Ovary (tissue), 10 donors: ENCODE measurements at regions of chr1 and their contacts with region 1.

Region 1: DNA sequence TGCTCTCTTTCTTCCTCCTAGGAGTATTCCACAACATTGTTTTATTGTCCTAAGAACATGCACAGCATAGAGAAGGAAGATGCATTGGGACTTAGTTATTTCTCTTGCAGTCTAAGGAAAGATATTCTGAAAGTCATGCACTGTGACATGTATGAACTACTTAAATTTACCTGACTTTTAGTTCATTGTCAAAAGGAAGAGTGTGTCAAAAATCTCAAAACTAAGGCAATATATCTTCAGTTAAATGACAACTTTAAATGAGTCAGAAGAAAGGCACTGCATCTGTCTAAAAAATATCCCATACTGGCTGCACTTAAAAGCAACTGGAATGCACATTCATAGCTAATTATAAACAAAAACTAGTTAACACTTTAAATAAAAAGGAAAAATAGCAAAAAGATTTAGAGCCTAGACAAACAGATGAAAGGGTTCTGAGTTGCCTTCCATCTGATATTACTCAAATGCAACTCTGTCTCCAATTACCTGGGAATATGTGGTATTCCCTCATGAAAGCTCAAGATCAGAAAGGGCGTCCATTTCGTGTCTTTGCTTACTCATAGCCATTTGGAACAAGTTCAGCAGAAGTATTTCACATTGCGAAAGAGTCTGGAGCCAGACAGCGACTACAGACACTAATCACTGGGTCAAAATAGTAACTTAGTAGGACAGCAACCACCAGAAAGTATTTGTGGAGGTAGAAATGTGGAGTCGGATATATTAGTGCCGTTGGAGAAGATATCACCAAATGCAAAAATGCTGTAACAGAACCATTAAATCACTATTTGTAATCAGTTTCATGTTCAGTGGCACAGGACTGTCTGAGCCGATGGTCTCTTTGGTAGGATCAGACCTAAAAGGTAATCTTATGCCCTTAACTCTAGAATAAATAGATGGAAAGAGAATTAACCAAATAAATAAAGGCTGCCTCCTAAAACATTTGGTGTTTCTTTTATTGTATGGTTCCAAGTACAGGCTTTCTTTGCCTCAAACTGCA is 225.7 kb downstream of the GREM2 start:
- DNase-seq: no peak
- H3K4me3 ChIP-seq: no peak overlapping the region
- H3K27ac ChIP-seq: no peak overlapping the region
- H3K4me1 ChIP-seq: no peaks in the 10 kb centered on the region
- H3K27me3 ChIP-seq: no peaks in the 10 kb centered on the region
- CTCF ChIP-seq: no peak
- EP300 ChIP-seq: no peak
- POLR2A ChIP-seq: no peak

Region 2: DNA sequence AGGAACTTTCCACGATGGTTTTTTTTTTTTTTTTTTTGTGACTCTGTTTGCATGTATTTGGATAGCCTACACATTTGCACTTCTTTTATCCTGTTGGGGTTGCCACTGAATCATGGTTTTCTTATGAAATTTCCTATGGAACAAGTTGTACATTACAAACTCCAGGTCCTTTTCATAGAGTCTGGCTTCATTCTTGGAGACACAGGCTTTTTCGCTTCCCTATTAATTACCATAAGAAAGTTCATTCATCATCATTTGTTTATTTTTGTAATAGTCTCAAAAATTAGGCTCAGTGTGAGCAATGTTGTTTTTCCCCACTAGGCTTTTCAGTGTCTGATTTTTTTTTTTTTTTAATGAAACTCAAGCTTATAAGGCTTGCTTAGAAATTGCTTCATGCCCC is 115.2 kb before region 1 on chr1:
- intact Hi-C with region 1: no loop called
- DNase-seq: no peak
- H3K4me3 ChIP-seq: no peak overlapping the region
- H3K27ac ChIP-seq: no peak overlapping the region
- H3K4me1 ChIP-seq: no peaks in the 10 kb centered on the region
- H3K27me3 ChIP-seq: no peaks in the 10 kb centered on the region
- CTCF ChIP-seq: no peak
- EP300 ChIP-seq: no peak
- POLR2A ChIP-seq: no peak

Region 3: DNA sequence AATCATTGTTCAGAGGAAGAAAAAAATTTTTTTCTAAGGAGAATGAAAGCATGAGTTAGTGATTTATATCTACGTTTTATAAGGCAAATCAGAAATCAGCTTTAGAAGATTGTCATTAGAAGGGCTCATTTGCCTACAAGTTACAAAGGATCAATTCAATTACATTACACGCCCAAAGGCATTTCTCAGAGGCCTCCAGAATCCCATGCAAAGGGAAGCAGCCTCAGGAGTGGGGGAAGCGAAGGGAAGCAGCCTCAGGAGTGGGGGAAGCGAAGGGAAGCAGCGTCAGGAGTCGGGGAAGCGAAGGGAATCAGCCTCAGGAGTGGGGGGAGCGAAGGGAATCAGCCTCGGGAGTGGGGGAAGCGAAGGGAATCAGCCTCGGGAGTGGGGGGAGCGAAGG is 19.5 kb after region 1 on chr1:
- intact Hi-C with region 1: loop called in 1 of 4 experiments (anchors 1 kb)
- DNase-seq: no peak
- H3K4me3 ChIP-seq: no peak overlapping the region
- H3K27ac ChIP-seq: no peak overlapping the region
- H3K4me1 ChIP-seq: no peaks in the 10 kb centered on the region
- H3K27me3 ChIP-seq: no peaks in the 10 kb centered on the region
- CTCF ChIP-seq: no peak
- EP300 ChIP-seq: no peak
- POLR2A ChIP-seq: no peak